Activated naive CD4-positive, alpha-beta T cell treated with anti-CD3 and anti-CD28 coated beads for 36 hours (primary cell): ENCODE measurements at regions of chr6 and their contacts with region 1.

Region 1: DNA sequence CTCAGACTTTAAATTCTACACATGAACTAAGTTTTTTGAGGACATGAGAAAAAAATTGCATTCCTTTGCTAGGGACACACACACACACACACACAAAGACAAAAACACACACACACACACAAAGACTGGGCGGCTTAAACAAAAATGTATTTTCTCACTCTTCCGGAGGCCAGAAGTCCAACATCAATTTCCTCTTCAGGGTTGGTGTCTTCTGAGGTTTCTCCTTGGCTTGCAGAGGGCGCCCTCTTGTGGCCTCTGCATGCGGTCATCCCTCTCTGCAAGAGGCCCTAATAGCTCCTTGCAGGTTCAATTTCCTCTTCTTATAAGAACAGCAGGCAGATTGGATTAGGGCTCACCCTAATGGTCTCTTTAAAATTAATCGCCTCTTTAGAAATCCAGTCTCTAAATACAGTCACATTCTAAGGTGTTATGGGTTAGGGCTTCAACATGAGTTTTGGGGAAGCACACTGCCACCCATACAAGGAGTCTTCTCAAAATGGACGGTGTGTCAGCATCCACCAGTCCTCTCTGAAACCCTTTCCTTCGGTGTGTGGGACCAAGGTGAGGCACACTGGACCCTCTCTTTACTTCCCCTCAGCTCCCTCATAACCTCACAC is 61.4 kb downstream of the GPR6 start:
- DNase-seq: peak; percentile 92
- H3K4me3 Mint-ChIP-seq: peak overlapping the region; percentile 84
- H3K27ac Mint-ChIP-seq: peak overlapping the region; percentile 96
- H3K4me1 Mint-ChIP-seq: peaks cover 12% of the 10 kb centered on the region
- H3K27me3 Mint-ChIP-seq: no peaks in the 10 kb centered on the region

Region 2: GRCh38 chr6:109526905-109527628 is 512.4 kb before region 1 on chr6:
- CTCF ChIA-PET with region 1: interaction called, 30 read pairs
- intact Hi-C with region 1: loop called (anchors 1 kb)
- DNase-seq: peak; percentile 70
- H3K4me3 Mint-ChIP-seq: no peak overlapping the region
- H3K27ac Mint-ChIP-seq: no peak overlapping the region
- H3K4me1 Mint-ChIP-seq: peaks cover 2% of the 10 kb centered on the region
- H3K27me3 Mint-ChIP-seq: no peaks in the 10 kb centered on the region

Region 3: GRCh38 chr6:109696355-109696754 is 343.1 kb before region 1 on chr6:
- CTCF ChIA-PET with region 1: interaction called, 134 read pairs
- intact Hi-C with region 1: no loop called
- DNase-seq: no peak
- H3K4me3 Mint-ChIP-seq: no peak overlapping the region
- H3K27ac Mint-ChIP-seq: no peak overlapping the region
- H3K4me1 Mint-ChIP-seq: peaks cover 7% of the 10 kb centered on the region
- H3K27me3 Mint-ChIP-seq: no peaks in the 10 kb centered on the region

Region 4: DNA sequence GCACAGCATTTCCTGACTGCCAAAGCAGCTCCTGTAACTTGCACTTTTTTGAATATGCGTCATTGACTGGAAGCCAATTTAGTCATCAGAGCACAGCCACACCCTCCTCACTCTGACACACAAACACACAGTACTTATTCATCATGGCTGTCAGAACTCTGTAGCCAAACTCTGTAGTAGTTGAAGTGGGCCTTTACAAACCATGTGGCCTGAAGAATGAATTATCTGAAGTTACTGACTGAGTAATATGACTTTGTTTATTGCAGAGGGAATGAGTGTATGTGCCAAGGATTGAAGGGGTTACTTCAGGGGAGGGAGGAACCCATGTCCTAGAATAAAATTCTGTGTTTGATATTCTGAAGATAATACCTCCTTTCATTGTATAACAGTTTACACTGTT is 245.7 kb before region 1 on chr6:
- CTCF ChIA-PET with region 1: interaction called, 5 read pairs
- intact Hi-C with region 1: loop called (anchors 2 kb)
- DNase-seq: peak; percentile 56
- H3K4me3 Mint-ChIP-seq: no peak overlapping the region
- H3K27ac Mint-ChIP-seq: peak overlapping the region; percentile 65
- H3K4me1 Mint-ChIP-seq: peaks cover 5% of the 10 kb centered on the region
- H3K27me3 Mint-ChIP-seq: no peaks in the 10 kb centered on the region

Region 5: GRCh38 chr6:110020888-110021287 is 18.6 kb before region 1 on chr6:
- CTCF ChIA-PET with region 1: interaction called, 21 read pairs
- intact Hi-C with region 1: no loop called
- DNase-seq: peak; percentile 33
- H3K4me3 Mint-ChIP-seq: no peak overlapping the region
- H3K27ac Mint-ChIP-seq: no peak overlapping the region
- H3K4me1 Mint-ChIP-seq: peaks cover 14% of the 10 kb centered on the region
- H3K27me3 Mint-ChIP-seq: no peaks in the 10 kb centered on the region

Region 6: GRCh38 chr6:110179401-110180227 is 140.1 kb after region 1 on chr6 and contains the start of gene WASF1:
- CTCF ChIA-PET with region 1: interaction called, 5 read pairs
- intact Hi-C with region 1: loop called (anchors 5 kb)
- DNase-seq: peak; percentile 93
- H3K4me3 Mint-ChIP-seq: no peak within 1 kb of the TSS
- H3K27ac Mint-ChIP-seq: peak within 1 kb of the TSS; percentile 33
- H3K4me1 Mint-ChIP-seq: peaks cover 5% of the 10 kb centered on the region
- H3K27me3 Mint-ChIP-seq: peaks cover 7% of the 10 kb centered on the region
- total RNA-seq, gene WASF1: 1.3 to 1.5 TPM